SK-N-SH (cell line): ENCODE measurements at regions of chr10 and their contacts with region 1.

Region 1: DNA sequence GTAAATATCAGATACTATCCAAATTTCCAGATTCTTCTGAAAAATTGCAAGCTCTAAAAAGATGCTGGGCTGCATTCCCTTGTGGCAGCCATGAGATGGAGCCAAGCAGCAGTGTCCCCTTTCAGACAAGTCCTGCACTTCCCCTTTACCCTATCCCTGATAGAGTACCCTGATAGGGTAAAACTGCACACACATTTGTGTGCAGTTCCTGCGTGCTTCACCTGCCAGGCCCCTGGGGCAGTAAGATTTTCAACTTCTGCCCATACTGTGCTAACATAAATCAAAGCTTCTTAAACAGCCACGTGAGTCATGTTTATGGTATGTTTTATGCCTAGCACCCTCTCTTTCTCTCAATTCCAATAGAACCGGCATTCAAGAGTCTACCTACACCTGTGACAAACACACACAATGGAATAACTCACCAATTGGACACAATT is 52.2 kb downstream of the IFIT5 start:
- DNase-seq: peak; percentile 23
- H3K4me3 ChIP-seq: no peak overlapping the region
- H3K27ac ChIP-seq: peak overlapping the region in 1 of 2 experiments; percentile 41; a peak in 1 of 4 replicates
- H3K4me1 ChIP-seq: peaks cover 3 to 22% of the 10 kb centered on the region in 2 experiments; a peak in 2 of 4 replicates
- H3K27me3 ChIP-seq: no peaks in the 10 kb centered on the region
- CTCF ChIP-seq: peak; percentile 68
- EP300 ChIP-seq: peak in 1 of 2 experiments; percentile 36; a peak in 1 of 4 replicates
- RAD21 ChIP-seq: peak; percentile 71

Region 2: GRCh38 chr10:89029785-89030437 is 436.7 kb before region 1 on chr10:
- CTCF ChIA-PET with region 1: no interaction called
- POLR2A ChIA-PET with region 1: no interaction called
- DNase-seq: peak; percentile 60
- H3K4me3 ChIP-seq: no peak overlapping the region; a peak in 1 of 4 replicates
- H3K27ac ChIP-seq: no peak overlapping the region
- H3K4me1 ChIP-seq: peaks cover 7 to 14% of the 10 kb centered on the region in 2 experiments; a peak in 3 of 4 replicates
- H3K27me3 ChIP-seq: no peaks in the 10 kb centered on the region
- CTCF ChIP-seq: peak; percentile 91
- EP300 ChIP-seq: no peak
- RAD21 ChIP-seq: peak; percentile 94

Region 3: GRCh38 chr10:89481662-89482061 is 15.0 kb after region 1 on chr10:
- CTCF ChIA-PET with region 1: interaction called, 20 read pairs
- POLR2A ChIA-PET with region 1: no interaction called
- DNase-seq: no peak
- H3K4me3 ChIP-seq: no peak overlapping the region
- H3K27ac ChIP-seq: peak overlapping the region in 1 of 2 experiments; percentile 85; a peak in 2 of 4 replicates
- H3K4me1 ChIP-seq: peaks cover 0 to 45% of the 10 kb centered on the region in 2 experiments; a peak in 2 of 4 replicates
- H3K27me3 ChIP-seq: no peaks in the 10 kb centered on the region
- CTCF ChIP-seq: no peak
- EP300 ChIP-seq: 0 out of 4 replicates have a peak, but pooled peaks of 1 of the 2 experiments have one; percentile 41
- RAD21 ChIP-seq: no peak

Region 4: GRCh38 chr10:89535171-89536012 is 68.8 kb after region 1 on chr10 and contains the start of gene SLC16A12:
- CTCF ChIA-PET with region 1: interaction called, 10 read pairs
- POLR2A ChIA-PET with region 1: no interaction called
- DNase-seq: peak; percentile 74
- H3K4me3 ChIP-seq: peak within 1 kb of the TSS; percentile 47 to 59
- H3K27ac ChIP-seq: no peak within 1 kb of the TSS
- H3K4me1 ChIP-seq: peaks cover 0 to 4% of the 10 kb centered on the region in 2 experiments; a peak in 1 of 4 replicates
- H3K27me3 ChIP-seq: peaks cover 16% of the 10 kb centered on the region; the same call in 1 of the 2 replicates
- CTCF ChIP-seq: no peak
- EP300 ChIP-seq: no peak
- RAD21 ChIP-seq: no peak
- polyA plus RNA-seq, gene SLC16A12: 0.13 TPM in 2 replicates

Region 5: GRCh38 chr10:89555701-89556445 is 89.3 kb after region 1 on chr10:
- CTCF ChIA-PET with region 1: interaction called, 11 read pairs
- POLR2A ChIA-PET with region 1: interaction called, 3 read pairs
- DNase-seq: no peak
- H3K4me3 ChIP-seq: no peak overlapping the region
- H3K27ac ChIP-seq: no peak overlapping the region
- H3K4me1 ChIP-seq: peaks cover 4 to 5% of the 10 kb centered on the region in 2 experiments; a peak in 2 of 4 replicates
- H3K27me3 ChIP-seq: no peaks in the 10 kb centered on the region
- CTCF ChIP-seq: peak; percentile 32
- EP300 ChIP-seq: no peak
- RAD21 ChIP-seq: peak; percentile 47

Region 6: DNA sequence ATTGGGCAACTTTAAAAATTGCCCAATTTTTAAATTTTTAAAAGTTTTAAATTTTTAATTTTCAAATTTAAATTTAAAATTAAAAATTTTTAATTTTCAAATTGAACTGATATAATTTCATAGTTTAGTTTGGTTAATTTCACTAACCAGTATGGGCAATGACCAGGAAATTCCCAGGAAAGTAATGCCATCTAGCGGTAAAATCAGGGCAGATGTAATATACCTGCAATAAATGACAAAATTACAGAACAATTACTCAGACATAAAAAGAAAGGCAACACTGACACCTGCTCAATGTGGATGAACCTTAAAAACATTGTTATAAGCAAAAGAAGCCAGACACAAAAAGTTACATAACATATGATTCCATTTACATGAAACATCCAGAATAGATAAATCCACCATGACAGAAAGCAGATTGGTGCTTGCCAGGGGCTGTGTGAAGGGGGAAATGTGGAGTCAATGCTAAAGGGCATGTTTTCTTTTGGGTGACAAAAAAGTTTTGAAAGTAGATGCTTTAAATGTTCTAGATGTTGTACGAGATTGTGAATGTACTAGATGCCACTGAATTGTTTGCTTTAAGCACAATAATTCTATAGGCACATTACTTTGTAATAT is 97.4 kb after region 1 on chr10:
- CTCF ChIA-PET with region 1: interaction called, 15 read pairs
- POLR2A ChIA-PET with region 1: no interaction called
- DNase-seq: peak; percentile 54
- H3K4me3 ChIP-seq: no peak overlapping the region
- H3K27ac ChIP-seq: no peak overlapping the region
- H3K4me1 ChIP-seq: no peaks in the 10 kb centered on the region; a peak in 2 of 4 replicates
- H3K27me3 ChIP-seq: no peaks in the 10 kb centered on the region
- CTCF ChIP-seq: peak; percentile 79
- EP300 ChIP-seq: no peak
- RAD21 ChIP-seq: peak; percentile 91